Head of caudate nucleus (tissue), 42 donors: ENCODE measurements at regions of chr7 and their contacts with region 1.

Region 1: DNA sequence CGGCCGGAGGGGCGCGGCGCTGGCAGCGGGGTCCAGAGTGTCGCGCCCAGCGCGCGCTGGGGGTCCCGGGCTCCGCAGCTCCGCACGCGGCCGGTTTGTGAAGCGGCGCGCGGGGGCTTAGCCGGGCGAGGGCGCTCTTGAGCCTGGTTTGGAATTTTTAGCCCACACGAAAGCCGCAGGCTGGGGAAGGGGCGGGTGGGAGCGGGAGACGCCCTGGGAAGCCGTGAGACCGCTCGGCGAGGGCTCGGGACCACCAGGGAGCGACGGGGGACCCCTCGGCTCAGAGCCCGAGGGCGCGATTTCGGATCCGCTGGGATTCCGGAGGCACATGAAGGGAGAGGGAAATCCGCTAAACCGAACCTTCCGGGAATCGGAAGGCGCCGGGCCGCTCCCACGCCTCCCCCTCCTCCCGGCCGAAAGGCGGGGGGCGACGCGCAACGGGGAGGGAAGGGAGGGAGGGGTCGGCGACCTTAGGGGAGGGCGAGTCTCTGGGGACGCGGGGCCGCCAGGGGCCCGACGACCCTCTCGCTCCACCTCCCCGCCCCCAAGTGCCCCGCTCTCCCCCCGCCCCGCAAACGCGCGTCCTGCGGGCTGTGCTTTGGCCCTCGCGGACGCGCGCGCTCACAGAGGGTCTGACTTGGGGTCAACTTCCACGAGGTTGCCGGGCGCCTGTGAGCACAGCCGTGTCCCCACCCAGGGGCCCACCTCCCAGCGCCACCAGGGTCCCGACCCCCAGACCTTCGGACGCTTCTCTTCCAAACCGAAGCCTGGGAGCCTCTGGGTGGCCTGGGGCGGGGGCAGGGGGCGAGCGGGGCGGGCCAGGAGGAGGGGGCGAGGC is 5.1 kb upstream of the ELFN1 start:
- DNase-seq: peak; percentile 22 to 84 (median 65)

Region 2: GRCh38 chr7:1883031-1883761 is 218.3 kb after region 1 on chr7:
- intact Hi-C with region 1: no loop called
- DNase-seq: no peak

Region 3: DNA sequence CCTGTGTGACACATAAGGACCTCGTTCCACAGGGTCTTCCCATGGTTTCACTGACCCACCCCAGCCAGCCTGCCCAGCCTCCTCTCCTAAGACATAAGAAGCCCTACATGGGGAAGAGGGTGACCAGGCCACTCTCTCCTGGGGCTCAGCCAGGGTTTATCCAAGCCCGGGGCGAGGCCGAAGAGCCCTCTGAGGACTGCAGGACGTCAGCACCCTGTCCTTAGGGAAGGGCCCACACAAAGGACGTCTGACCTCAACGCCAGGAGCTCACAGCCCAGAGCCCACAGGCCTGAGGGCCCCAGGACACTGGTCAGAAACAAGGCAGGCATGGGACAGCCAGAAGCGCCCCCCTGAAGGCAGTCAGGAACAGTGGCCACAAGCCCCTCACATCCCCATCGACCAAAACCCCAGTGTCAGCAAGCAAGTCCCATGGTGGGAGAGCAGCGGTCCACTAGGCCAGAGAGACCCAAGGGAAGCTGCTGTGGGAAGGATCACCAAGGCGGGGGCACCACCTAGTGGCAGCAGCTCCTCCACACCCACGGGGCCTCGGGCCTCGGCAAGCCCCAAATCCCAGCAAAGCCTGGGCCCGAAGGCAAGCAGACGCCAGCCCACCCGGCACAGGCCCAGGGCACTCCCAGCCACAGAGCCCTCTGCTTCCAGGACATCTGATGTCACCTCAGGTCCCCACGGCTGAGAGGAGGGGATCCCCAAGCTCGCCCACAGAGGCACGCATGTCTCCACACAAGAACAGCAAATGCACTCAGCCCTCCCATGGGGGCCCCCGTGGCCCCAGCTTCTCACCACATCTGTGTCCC is 544.4 kb after region 1 on chr7:
- intact Hi-C with region 1: loop called (anchors 10 kb)
- DNase-seq: peak; percentile 71 to 94 (median 85)

Region 4: GRCh38 chr7:2354186-2354938 is 689.4 kb after region 1 on chr7 and contains the start of gene EIF3B:
- intact Hi-C with region 1: loop called (anchors 10 kb)
- DNase-seq: peak; percentile 73 to 95 (median 87)